ENCODE measurements at regions of chr7 and their contacts with region 1.

Region 1: GRCh38 chr7:42940985-42941847 is 9.0 kb downstream of the MRPL32 start:
- DNase-seq: peak; percentile 95
- H3K4me3 ChIP-seq: no peak overlapping the region
- H3K27ac ChIP-seq: no peak overlapping the region
- H3K4me1 ChIP-seq: no peaks in the 10 kb centered on the region
- H3K27me3 ChIP-seq: no peaks in the 10 kb centered on the region
- CTCF ChIP-seq: peak; percentile 53 to 89 (median 82)
- POLR2A ChIP-seq: no peak

Region 2: DNA sequence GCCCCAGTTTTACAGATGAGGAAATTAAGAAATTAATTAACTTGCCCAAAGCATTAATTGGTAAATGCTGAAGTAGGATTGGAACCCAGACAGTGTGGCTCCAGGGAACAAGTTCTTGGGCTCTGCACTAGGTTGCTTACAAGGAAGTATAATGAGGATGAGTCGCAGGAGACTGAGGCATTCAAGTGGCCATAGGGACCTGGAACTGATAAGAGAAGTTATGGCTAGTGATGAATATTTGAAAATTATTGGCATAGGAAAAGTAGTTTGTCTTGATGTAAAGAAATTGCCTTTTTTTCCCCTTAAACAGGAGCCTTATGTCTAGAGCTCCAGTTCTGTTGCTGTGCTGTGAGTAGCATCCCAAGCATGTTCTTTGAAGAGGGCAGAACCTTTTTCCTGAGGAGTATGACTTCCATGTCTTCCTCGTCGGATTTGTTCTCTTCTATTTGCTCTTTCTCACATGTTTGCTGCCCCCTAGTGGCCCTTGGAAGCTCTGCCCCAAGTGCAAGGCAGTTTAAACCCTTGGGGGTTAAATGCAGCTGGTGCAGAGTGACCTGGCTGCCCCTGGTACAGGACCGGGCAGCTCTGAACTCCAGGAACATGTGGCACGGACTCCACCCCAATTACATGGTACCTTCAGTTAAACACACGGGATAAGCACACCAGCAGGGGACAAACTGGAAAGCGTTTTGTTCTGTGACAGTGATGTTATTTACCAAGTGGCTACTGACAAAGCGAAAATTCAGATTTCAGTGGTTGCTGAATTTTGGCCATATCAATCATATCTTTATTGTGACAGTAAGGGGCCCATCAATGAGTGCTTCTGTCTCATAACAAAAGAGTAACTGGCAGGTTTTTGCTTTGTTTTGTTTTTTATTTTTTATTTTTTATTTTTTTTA is 320.0 kb after region 1 on chr7:
- intact Hi-C with region 1: loop called (anchors 5 kb)
- DNase-seq: peak; percentile 87
- H3K4me3 ChIP-seq: no peak overlapping the region
- H3K27ac ChIP-seq: no peak overlapping the region
- H3K4me1 ChIP-seq: peaks cover 2% of the 10 kb centered on the region
- H3K27me3 ChIP-seq: no peaks in the 10 kb centered on the region
- CTCF ChIP-seq: peak; percentile 74 to 98 (median 85)
- POLR2A ChIP-seq: no peak

Region 3: DNA sequence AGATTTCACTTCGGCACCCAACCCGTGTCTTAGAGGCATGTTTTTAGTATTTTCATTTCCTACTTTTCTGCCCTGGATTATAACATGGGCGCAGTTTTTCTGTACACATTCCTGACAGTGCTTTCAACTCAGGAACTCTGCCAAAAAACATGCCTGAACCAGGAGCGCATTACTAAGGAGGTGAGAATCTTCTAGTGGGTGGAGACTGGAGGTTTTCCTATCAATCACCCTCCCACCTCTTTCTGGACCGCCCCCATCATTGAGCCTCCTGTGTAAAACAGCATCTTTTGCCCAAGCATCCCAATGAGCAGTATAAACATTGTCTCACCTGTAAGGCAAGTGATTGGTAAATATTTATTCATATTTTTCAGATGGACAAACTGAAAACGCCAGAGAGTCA is 694.9 kb after region 1 on chr7:
- intact Hi-C with region 1: no loop called
- DNase-seq: no peak
- H3K4me3 ChIP-seq: no peak overlapping the region
- H3K27ac ChIP-seq: no peak overlapping the region
- H3K4me1 ChIP-seq: no peaks in the 10 kb centered on the region
- H3K27me3 ChIP-seq: no peaks in the 10 kb centered on the region
- CTCF ChIP-seq: no peak
- POLR2A ChIP-seq: no peak